ENCODE measurements at regions of chr16 and their contacts with region 1.

Region 1: DNA sequence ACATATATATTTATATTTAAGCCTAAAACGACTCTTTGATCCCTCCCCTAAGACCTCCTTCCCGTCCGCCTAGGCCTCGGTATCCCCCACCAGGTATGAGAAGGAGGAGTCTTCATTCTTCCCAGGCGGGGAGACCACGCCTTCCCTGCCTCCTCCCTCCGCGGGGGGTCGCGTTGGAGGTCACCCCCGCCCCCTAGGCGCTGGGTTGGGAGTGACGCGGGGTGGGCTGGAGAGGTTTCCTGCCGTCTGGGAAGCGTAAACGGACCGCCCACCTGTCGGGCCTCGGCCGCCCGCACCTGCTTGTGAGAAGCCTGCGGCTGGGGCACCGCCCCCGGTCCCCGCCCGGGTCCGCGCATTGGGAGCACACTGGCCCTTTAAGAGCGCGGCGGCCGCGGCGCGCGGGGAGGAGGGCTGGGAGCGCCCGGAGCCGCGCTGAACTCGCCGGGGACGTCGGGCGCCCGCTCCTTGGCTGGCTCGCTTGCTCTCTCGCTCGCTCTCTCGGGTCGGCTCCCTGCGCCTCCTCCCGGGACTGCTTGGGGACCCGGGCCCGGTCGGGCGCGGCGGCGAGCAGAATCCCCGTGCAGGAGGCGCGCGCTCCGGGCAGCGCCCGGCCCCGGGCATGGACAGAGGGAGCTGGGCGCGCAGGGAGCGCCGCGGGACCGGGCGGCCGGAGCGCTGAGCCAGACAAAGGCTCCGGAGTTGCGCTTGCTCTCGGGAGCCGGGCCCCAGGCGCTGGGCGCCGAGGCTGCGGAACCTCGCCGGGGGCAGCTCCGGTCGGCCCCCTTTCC is at the start of gene MMP15:
- DNase-seq: peak; percentile 73 to 88 (median 78)
- ATAC-seq: peak; percentile 32 to 67 (median 56)
- H3K4me3 ChIP-seq: peak within 1 kb of the TSS; percentile 60 to 96 (median 88)
- H3K27ac ChIP-seq: peak within 1 kb of the TSS; percentile 75 to 99 (median 95)
- H3K4me1 ChIP-seq: peaks cover 17 to 91% (median 67%) of the 10 kb centered on the region in 12 donors
- H3K27me3 ChIP-seq: peaks cover 0 to 25% (median 0%) of the 10 kb centered on the region in 9 donors
- CTCF ChIP-seq: no peak
- POLR2A ChIP-seq: peak in 1 of 2 donors; percentile 69
- total RNA-seq, gene MMP15: 24.2 to 84.7 (median 60.9) TPM

Region 2: DNA sequence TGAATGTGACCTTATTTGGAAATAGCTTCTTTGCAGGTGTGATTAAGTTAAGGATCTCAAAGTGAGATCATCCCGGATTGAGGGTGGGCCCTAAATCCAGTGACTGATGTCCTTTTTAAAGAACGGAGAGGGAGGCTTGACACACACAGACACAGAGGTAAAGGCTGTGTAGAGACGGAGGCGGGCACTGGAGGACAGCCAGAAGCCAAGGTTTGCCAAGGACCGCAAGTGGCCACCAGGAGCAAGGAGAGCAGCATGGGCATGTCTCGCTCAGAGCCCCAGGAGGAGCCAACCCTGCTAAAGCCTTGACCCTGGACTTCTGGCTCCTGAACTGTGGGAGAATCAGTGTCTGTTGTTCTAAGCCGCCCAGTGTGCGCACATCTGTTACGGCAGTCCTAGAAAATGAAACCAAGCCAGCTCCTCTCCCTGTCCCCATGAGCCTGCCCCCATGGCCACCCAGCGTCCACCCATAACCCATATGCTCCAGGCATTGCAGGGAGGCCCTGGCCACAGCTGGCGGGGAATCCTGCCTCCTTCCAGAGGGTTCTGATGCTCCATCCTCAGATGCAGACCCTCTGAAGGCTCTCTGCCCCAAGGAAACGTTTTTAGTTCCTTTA is 69.9 kb before region 1 on chr16:
- intact Hi-C with region 1: no loop called
- DNase-seq: peak in 2 of 5 donors; percentile 42 to 43
- ATAC-seq: peak in 3 of 4 donors; percentile 31 to 64 (median 41)
- H3K4me3 ChIP-seq: no peak overlapping the region
- H3K27ac ChIP-seq: no peak overlapping the region
- H3K4me1 ChIP-seq: no peaks in the 10 kb centered on the region
- H3K27me3 ChIP-seq: no peaks in the 10 kb centered on the region
- CTCF ChIP-seq: peak in 1 of 12 donors; percentile 10
- POLR2A ChIP-seq: no peak

Region 3: GRCh38 chr16:58084645-58085044 is 59.1 kb after region 1 on chr16:
- intact Hi-C with region 1: loop called in 2 of 10 experiments (anchors 5 kb)
- DNase-seq: no peak
- ATAC-seq: no peak
- H3K4me3 ChIP-seq: no peak overlapping the region
- H3K27ac ChIP-seq: no peak overlapping the region
- H3K4me1 ChIP-seq: peaks cover 0 to 25% (median 9%) of the 10 kb centered on the region in 12 donors
- H3K27me3 ChIP-seq: no peaks in the 10 kb centered on the region
- CTCF ChIP-seq: no peak
- POLR2A ChIP-seq: no peak

Region 4: DNA sequence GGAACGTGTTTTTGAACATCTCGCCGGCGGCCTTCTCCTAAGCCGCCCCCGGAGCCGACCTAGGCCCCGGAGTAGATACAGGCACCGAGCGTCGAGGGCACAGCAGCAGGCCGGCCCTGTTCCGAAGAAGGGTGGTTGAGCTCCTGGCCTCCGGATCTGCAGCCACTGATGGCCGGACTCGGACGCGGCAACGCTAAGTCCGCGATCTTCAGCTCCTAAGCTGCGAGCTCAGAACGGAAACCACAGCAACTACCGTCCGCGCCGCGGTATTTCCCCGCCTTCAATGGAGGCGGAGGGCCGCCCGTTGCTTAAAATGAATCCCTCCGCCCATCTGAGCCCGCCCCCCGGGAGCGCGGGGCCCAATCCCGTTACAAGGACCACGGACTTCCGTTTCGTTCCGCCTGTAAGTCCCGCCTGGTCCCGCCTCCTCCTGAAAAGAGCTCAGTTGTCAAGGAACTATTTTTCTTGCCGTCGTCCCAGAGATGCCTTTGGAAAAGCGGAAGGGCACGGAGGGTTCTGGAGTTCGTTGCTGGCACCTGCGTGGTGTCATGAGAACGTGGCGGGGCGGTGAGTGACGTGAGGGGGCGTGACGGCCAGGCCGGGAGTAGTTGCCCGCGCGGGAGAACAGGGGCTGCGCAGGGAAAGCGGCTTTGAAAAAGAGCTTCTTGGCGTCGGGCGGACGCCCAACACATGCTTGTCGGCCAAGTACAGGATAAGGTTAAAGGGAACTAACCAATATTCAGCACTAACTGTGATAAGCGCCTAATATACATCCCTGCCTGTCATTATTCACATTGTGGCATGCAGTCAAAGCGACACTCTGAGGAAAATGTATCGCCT is 103.8 kb after region 1 on chr16 and contains the start of gene CFAP20:
- intact Hi-C with region 1: loop called in 1 of 10 experiments (anchors 2 kb)
- DNase-seq: peak; percentile 98 to 100 (median 99)
- ATAC-seq: peak; percentile 95 to 97 (median 97)
- H3K4me3 ChIP-seq: peak within 1 kb of the TSS; percentile 67 to 93 (median 85)
- H3K27ac ChIP-seq: peak within 1 kb of the TSS; percentile 37 to 95 (median 90)
- H3K4me1 ChIP-seq: peaks cover 0 to 50% (median 40%) of the 10 kb centered on the region in 12 donors
- H3K27me3 ChIP-seq: no peaks in the 10 kb centered on the region
- CTCF ChIP-seq: no peak
- POLR2A ChIP-seq: peak; percentile 76 to 97
- total RNA-seq, gene CFAP20: 30.7 to 57.5 (median 36.3) TPM

Region 5: GRCh38 chr16:58306327-58306726 is 280.8 kb after region 1 on chr16:
- intact Hi-C with region 1: loop called in 3 of 10 experiments (anchors 5 to 10 kb)
- DNase-seq: no peak
- ATAC-seq: no peak
- H3K4me3 ChIP-seq: no peak overlapping the region
- H3K27ac ChIP-seq: no peak overlapping the region
- H3K4me1 ChIP-seq: peaks cover 0 to 8% (median 0%) of the 10 kb centered on the region in 12 donors
- H3K27me3 ChIP-seq: no peaks in the 10 kb centered on the region
- CTCF ChIP-seq: peak in 9 of 12 donors; percentile 25 to 54 (median 44)
- POLR2A ChIP-seq: no peak

Region 6: DNA sequence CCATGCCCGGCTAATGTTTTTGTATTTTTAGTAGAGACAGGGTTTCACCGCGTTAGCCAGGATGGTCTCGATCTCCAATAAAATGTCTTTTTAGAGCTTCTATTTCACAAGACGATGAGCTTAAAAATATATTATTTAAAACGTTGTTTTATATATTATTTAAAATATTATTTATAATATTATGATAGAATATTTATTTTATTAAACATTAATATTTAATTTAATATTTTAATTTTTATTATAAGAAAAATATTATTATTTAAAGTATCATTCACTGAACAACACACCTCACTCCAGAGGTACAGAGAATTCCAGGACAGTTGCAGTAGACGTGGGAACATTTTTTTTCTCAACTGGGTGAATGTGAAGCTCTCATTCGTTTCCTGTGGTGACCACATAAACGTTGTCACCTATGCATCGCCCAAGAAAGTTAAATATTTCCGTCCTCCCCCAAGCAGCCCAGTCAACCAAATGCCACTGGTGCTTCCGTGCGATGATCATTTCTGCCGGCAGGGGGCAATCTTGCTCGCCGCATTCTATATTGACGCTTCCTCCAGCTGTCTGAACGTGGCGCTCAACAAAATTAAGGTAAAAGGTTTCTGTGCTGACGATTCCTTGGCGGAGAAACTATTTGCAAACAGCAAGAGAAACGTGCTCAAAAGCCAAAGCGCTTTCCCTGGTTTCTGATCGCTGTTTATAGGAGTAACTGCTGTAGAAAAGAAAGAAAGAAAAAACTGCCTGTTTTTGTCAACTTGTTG is 311.0 kb after region 1 on chr16:
- intact Hi-C with region 1: loop called in 1 of 10 experiments (anchors 10 kb)
- DNase-seq: peak; percentile 71 to 88 (median 82)
- ATAC-seq: peak; percentile 52 to 81 (median 78)
- H3K4me3 ChIP-seq: peak overlapping the region in 10 of 12 donors; percentile 20 to 53 (median 38)
- H3K27ac ChIP-seq: peak overlapping the region in 10 of 12 donors; percentile 23 to 77 (median 58)
- H3K4me1 ChIP-seq: peaks cover 0 to 39% (median 25%) of the 10 kb centered on the region in 12 donors
- H3K27me3 ChIP-seq: no peaks in the 10 kb centered on the region
- CTCF ChIP-seq: peak; percentile 89 to 98 (median 94)
- POLR2A ChIP-seq: no peak

Measured in heart left ventricle (tissue), 16 donors.